Activated CD4-positive, alpha-beta memory T cell treated with anti-CD3 and anti-CD28 coated beads for 36 hours (primary cell): ENCODE measurements at regions of chr4 and their contacts with region 1.

Region 1: GRCh38 chr4:143513306-143514168 is at the start of gene SMARCA5:
- DNase-seq: peak; percentile 97
- H3K4me3 Mint-ChIP-seq: peak within 1 kb of the TSS; percentile 97
- H3K27ac Mint-ChIP-seq: peak within 1 kb of the TSS; percentile 97
- H3K4me1 Mint-ChIP-seq: peaks cover 25% of the 10 kb centered on the region
- H3K27me3 Mint-ChIP-seq: no peaks in the 10 kb centered on the region
- total RNA-seq, gene SMARCA5: 67.0 to 69.3 TPM

Region 2: DNA sequence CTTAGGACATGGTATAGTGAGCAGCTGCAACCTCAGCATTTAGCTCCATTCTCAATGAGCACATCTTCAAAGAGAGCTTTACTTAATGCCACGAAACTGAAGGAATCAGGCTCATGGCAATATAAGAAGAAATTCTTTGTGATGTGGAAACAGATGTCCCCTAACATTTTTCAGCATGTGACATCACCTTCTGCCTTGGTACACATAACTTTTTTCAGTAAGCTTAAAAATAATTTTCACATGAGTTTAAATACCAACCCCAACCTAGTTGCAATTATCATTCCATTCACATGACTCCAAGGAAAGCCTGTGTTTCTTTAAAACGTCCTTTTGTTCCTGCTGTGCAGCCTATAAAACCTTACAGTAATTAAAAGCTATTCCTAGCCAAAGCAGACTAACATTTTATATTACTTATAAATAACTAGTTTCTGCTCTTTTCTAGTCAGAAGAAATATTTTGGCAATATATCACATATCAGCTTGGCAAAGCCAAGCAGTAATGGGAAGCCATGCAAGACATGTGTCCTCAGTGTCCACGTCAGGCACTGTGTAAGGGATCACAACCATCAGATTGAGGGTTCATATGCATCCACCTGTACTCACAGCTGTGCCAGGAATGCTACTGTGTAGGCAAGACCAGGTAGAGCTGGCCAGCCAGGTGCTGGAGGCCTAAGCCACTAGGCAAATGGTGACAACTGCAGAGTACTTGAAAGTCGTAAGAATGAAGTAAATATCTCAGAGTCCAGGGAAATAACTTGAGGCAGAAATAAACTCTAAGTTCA is 1134.1 kb before region 1 on chr4:
- CTCF ChIA-PET with region 1: no interaction called
- POLR2A ChIA-PET with region 1: no interaction called
- intact Hi-C with region 1: loop called (anchors 10 kb)
- DNase-seq: no peak
- H3K4me3 Mint-ChIP-seq: no peak overlapping the region
- H3K27ac Mint-ChIP-seq: peak overlapping the region; percentile 85
- H3K4me1 Mint-ChIP-seq: peaks cover 78% of the 10 kb centered on the region
- H3K27me3 Mint-ChIP-seq: no peaks in the 10 kb centered on the region

Region 3: GRCh38 chr4:143133977-143134376 is 379.6 kb before region 1 on chr4:
- CTCF ChIA-PET with region 1: no interaction called
- POLR2A ChIA-PET with region 1: no interaction called
- intact Hi-C with region 1: no loop called
- DNase-seq: no peak
- H3K4me3 Mint-ChIP-seq: no peak overlapping the region
- H3K27ac Mint-ChIP-seq: no peak overlapping the region
- H3K4me1 Mint-ChIP-seq: no peaks in the 10 kb centered on the region
- H3K27me3 Mint-ChIP-seq: no peaks in the 10 kb centered on the region

Region 4: DNA sequence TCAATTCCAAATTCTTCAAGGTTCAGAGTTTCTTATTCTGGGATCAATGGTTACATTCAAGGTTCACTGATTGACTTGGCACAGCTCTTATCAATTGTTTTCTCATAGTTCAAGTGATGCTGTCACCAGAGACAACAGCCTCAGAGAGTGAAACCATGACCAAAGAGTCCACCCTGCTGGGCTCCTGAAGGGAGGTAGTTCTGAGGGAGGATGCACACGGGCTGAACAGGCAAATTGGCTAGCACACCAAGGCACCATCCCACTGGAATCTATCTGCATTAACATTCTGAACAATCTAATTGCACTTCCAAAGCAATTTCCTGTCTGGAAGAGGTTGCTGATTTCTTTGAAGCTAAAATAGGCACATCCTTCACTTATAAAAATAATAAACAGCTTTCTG is 193.4 kb before region 1 on chr4:
- CTCF ChIA-PET with region 1: no interaction called
- POLR2A ChIA-PET with region 1: no interaction called
- intact Hi-C with region 1: no loop called
- DNase-seq: no peak
- H3K4me3 Mint-ChIP-seq: no peak overlapping the region
- H3K27ac Mint-ChIP-seq: no peak overlapping the region
- H3K4me1 Mint-ChIP-seq: no peaks in the 10 kb centered on the region
- H3K27me3 Mint-ChIP-seq: peaks cover 3% of the 10 kb centered on the region

Region 5: GRCh38 chr4:143335979-143336780 is 177.4 kb before region 1 on chr4:
- CTCF ChIA-PET with region 1: no interaction called
- POLR2A ChIA-PET with region 1: no interaction called
- intact Hi-C with region 1: loop called (anchors 1 kb)
- DNase-seq: peak; percentile 42
- H3K4me3 Mint-ChIP-seq: peak overlapping the region; percentile 72
- H3K27ac Mint-ChIP-seq: no peak overlapping the region
- H3K4me1 Mint-ChIP-seq: peaks cover 8% of the 10 kb centered on the region
- H3K27me3 Mint-ChIP-seq: peaks cover 39% of the 10 kb centered on the region

Region 6: DNA sequence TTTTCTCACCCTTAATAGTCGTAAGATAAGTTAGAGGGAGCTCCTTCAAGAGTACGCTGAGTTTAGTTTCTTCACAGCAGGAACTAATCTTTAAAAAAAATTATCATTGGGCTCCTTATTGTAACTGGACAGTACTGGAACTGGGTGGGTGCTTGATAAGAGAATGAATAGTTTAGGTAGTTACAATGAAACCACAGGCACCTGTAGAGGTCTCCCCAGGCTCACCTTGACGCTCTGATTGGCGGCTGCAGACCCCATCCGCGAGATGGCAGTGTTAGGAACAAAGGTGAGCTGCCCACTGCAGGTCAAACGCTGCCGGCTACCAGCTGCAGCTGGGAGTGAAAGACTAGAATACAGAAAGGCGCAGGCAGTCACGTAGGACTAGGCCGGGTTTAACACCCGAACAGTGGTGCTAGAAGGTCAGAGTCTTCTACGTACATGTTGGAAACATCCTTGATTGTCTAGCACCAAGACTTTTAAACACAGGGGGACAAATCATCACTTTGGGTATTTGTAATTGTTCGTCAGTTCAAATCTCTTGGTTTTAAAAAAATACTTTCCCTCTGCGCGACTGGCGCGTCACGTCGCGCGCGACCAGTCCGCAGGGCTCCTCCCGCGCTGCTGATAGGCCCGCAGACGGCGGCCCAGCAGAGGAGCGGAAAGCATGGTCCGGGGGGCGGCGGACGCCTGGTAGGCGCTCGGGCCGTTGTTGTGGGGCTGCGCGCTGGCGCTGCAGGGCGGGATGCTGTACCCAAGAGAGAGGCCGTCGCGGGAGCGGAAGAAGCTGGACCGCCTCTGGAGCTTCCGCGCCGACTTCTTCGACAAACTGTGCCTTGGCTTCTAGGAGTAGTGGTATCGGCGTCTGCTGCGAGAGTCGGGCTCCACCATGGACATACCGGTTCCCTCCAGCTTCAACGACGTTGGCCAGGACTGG is 45.6 kb after region 1 on chr4:
- CTCF ChIA-PET with region 1: no interaction called
- POLR2A ChIA-PET with region 1: interaction called, 3 read pairs
- intact Hi-C with region 1: loop called (anchors 1 kb)
- DNase-seq: peak; percentile 79
- H3K4me3 Mint-ChIP-seq: peak overlapping the region; percentile 83
- H3K27ac Mint-ChIP-seq: peak overlapping the region; percentile 78
- H3K4me1 Mint-ChIP-seq: peaks cover 31% of the 10 kb centered on the region
- H3K27me3 Mint-ChIP-seq: no peaks in the 10 kb centered on the region